Mammary epithelial cell (primary cell): ENCODE measurements at regions of chr17 and their contacts with region 1.

Region 1: DNA sequence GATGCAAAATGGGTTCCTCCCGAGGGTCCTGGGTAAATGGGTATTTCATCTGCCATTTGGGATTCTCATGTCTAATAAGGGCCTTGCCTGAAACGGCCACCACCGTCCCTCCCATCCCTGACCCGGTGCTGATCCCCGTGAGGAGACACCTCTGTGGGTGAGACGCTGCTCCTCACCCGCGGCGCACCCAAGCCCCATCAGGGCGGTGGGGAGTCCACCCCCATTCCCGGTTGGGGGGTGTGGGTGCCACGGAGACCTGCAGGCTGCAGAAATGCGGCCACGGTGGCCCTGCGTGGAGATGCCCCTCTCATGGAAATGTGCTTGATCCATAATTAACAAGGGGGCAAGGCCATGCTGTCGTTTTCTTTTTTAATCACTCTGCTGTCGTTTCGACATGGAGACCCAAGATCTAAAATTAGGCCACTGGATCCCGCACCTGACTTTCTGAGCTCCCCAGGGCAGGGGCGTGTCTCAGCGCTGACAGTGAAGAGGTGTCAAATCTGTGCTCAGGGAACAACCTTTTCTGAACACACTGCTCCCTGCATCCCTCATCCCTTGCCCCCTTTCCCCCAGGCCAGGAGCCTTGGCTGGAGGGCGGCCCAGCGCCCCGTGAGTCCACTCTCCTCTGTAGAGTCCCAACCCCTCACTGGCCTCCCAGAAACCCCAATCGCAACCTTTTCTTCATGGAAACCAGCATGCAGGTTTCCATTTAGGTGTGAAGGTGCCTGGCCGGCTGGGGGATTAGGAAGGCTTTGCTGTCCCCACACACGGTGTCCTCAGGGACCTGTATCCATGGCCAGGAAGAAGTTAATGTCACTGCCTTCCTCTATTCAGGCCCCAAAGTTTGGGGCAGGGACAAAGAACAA is 38.9 kb downstream of the PEMT start:
- DNase-seq: no peak
- H3K4me3 ChIP-seq: no peak overlapping the region
- H3K27ac ChIP-seq: no peak overlapping the region
- H3K4me1 ChIP-seq: no peaks in the 10 kb centered on the region
- H3K27me3 ChIP-seq: no peaks in the 10 kb centered on the region
- CTCF ChIP-seq: no peak

Region 2: GRCh38 chr17:17258998-17259397 is 293.6 kb before region 1 on chr17:
- CTCF ChIA-PET with region 1: no interaction called
- dilution Hi-C with region 1: no loop called
- in situ Hi-C with region 1: no loop called
- intact Hi-C with region 1: no loop called
- DNase-seq: no peak
- H3K4me3 ChIP-seq: no peak overlapping the region
- H3K27ac ChIP-seq: no peak overlapping the region
- H3K4me1 ChIP-seq: no peaks in the 10 kb centered on the region
- H3K27me3 ChIP-seq: no peaks in the 10 kb centered on the region
- CTCF ChIP-seq: no peak

Region 3: DNA sequence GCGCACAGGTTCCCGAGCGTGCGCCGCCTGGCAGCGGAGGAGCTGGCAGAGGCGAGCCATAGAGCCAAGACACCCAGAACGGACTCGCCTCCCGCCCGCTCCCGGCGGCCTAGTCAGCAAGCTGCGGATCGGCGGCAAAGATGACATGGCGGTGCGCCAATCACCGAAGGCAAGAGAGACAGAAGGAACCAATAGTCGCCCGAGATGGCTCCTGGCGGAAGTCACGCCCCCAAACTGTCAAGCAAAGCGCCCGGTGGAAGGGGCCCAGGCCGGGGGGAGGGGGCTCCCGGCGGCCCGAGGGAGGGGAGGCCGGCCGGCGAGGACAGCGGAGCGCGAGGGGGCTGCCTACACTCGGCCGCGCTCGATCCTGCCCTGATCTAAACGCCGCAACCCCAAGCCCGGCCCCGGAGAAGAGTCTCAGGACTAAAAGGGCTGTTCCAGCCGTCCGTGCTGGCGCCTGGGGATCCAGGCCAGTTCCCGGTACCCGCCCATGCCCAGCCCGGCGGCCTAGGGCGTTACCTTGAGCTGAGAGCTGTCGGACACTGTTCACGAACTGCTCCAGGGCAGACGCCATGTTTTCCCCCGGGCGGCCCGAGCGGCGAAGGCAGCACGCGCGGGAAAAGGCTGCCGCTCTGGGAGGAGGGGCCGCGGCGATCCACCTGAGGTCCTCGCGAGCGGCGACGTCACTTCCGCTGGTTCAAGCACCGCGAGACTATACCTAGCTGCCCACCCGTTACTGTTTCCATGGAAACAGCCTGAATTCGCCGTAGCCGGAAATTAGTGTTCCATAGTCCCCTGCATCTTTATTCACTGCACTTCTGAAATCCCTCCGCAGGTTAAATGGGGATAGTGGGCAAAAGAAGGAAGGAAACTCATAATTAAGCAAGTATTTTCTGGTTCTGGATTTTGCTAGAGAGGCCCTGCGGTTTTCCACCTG is 271.7 kb before region 1 on chr17 and contains the start of gene COPS3:
- CTCF ChIA-PET with region 1: no interaction called
- dilution Hi-C with region 1: no loop called
- in situ Hi-C with region 1: no loop called
- intact Hi-C with region 1: no loop called
- DNase-seq: peak; percentile 95
- H3K4me3 ChIP-seq: peak within 1 kb of the TSS; percentile 92 to 98 (median 96)
- H3K27ac ChIP-seq: peak within 1 kb of the TSS; percentile 95
- H3K4me1 ChIP-seq: peaks cover 15% of the 10 kb centered on the region
- H3K27me3 ChIP-seq: no peaks in the 10 kb centered on the region
- CTCF ChIP-seq: peak in 1 of 2 donors; percentile 4
- total RNA-seq, gene COPS3: 69.5 to 74.2 TPM

Region 4: DNA sequence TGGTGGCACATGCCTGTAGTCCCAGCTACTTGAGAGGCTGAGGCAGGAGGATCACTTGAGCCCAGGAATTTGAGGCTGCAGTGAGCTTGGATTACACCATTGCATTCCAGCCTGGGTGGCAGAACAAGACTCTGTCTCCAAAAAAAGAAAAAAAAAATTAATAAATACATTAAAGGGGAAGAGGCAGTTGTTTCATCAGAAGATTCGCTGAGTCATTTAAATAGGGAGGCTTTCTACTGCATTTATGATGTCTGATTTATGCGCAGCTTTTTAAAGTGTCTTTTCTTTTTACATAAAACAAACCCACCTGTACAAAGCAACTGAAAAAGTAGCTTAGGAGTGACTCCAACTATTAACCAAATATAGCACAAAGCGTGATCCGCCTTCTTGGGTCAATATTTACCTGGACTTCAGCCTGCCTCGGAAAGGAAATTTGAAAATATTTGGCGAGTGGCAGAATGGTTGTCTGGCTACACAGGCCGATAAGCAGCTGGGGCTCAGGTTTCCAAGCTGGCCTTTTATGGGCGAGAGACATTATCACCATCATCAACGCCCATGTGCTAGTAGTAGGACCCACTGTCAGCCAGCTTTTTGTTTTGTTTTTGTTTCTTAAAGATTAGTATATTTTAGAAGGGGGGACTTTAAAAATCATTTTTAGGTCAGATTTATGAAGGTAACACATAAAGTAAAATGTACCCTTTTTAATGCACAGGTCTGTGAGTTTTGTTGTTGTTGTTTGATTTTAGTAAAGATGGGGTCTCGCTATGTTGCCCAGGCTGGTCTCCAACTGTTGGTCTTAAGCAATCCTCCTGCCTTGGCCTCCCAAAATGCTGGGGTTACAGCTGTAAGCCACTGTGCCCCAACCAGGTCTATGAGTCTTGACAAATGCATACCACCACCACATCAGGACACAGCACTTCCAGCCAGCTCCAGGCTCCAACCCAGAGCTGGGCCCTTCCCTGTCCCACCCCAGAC is 13.9 kb before region 1 on chr17:
- CTCF ChIA-PET with region 1: interaction called, 10 read pairs
- dilution Hi-C with region 1: no loop called
- in situ Hi-C with region 1: no loop called
- intact Hi-C with region 1: no loop called
- DNase-seq: no peak
- H3K4me3 ChIP-seq: no peak overlapping the region
- H3K27ac ChIP-seq: no peak overlapping the region
- H3K4me1 ChIP-seq: no peaks in the 10 kb centered on the region
- H3K27me3 ChIP-seq: no peaks in the 10 kb centered on the region
- CTCF ChIP-seq: no peak

Region 5: GRCh38 chr17:17741349-17742023 is 188.9 kb after region 1 on chr17:
- CTCF ChIA-PET with region 1: no interaction called
- dilution Hi-C with region 1: no loop called
- in situ Hi-C with region 1: no loop called
- intact Hi-C with region 1: no loop called
- DNase-seq: peak; percentile 44
- H3K4me3 ChIP-seq: peak overlapping the region in 1 of 3 experiments; percentile 6
- H3K27ac ChIP-seq: peak overlapping the region; percentile 82
- H3K4me1 ChIP-seq: peaks cover 52% of the 10 kb centered on the region
- H3K27me3 ChIP-seq: no peaks in the 10 kb centered on the region
- CTCF ChIP-seq: peak in 1 of 2 donors; percentile 29